ENCODE measurements at regions of chr12 and their contacts with region 1.

Region 1: DNA sequence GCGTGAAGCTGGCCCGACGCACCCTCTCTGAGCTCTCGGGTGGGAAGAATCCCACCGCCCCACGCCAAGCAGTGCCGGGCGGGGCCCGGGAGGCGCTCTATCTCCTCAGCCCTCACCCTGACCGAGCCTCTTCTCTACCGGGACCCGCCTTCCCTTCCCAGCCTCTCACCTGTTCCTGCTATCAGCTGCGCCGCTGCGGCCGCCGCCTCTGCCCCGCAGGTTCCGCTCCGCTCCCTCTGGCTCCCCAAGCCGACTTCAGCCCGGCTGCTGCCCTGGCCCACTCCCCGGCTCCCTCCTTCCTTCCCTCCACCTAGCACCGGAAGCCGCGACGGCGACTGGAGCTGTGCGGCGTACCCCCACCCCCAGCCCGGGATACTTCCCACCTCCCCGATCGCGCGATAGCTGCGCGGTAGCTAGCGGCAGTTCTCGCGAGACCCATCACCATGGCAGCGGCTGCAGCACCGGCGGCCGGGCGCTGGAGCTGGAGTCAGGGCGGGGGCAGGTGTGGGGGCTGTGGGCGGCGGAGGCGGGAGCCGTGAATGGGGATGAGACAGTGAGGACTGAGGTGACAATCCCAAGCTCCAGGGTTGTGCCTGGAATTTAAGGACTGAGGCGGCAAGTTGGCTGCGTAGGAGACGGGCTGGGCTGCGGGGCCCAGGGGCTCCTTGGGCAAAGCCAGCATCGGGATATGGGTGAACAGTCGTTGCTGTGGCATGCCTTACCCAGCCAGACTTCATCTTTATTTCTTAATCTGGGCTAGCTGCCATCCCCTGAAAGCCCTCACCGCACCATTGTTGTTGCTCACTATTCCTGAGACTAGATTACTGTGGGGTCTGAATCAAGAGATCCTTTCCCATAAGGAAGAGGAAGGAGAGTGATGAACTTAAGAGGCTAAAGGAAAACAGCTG is at the start of gene ARF3:
- DNase-seq: peak; percentile 97
- H3K4me3 ChIP-seq: peak within 1 kb of the TSS; percentile 92
- H3K27ac ChIP-seq: peak within 1 kb of the TSS; percentile 86
- H3K4me1 ChIP-seq: peaks cover 16% of the 10 kb centered on the region
- H3K27me3 ChIP-seq: no peaks in the 10 kb centered on the region
- CTCF ChIP-seq: no peak
- total RNA-seq, gene ARF3: 183 and 196 TPM in 2 replicates

Region 2: DNA sequence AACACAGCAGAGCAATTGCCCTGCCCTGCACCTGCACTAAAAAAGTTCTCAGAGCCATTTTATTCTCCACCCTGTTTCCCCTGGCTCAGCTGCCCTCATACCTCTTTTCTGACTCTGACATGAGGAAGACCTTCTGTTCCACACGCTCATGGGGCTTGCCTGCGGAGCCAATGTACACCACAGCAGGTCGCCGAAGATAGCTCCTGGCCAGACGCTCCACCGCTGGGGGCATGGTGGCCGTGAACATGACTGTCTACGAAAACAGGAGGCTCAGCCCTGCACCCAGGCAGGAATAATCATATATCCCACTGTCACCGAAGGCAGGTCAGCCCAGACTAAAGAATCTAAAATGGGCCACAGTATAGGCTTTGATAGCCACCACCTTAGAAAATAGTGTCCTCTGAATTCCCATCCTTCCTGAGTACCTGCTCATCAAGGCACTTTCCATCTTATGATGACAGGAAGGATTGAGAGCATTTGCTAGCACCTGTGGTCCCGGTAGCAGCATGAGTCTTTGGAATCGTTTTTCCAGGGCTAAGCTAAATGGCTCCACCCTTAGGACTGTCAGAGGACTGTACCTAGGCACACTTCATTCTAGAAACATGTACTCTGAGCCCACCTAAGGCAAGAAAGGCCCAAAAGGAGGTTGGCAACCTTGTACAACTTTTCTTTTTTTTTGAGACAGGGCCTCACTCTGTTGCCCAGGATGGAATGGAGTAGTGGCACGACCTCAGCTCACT is 124.9 kb before region 1 on chr12:
- CTCF ChIA-PET with region 1: no interaction called
- POLR2A ChIA-PET with region 1: no interaction called
- intact Hi-C with region 1: no loop called
- DNase-seq: no peak
- H3K4me3 ChIP-seq: no peak overlapping the region
- H3K27ac ChIP-seq: no peak overlapping the region
- H3K4me1 ChIP-seq: no peaks in the 10 kb centered on the region
- H3K27me3 ChIP-seq: no peaks in the 10 kb centered on the region
- CTCF ChIP-seq: no peak

Region 3: DNA sequence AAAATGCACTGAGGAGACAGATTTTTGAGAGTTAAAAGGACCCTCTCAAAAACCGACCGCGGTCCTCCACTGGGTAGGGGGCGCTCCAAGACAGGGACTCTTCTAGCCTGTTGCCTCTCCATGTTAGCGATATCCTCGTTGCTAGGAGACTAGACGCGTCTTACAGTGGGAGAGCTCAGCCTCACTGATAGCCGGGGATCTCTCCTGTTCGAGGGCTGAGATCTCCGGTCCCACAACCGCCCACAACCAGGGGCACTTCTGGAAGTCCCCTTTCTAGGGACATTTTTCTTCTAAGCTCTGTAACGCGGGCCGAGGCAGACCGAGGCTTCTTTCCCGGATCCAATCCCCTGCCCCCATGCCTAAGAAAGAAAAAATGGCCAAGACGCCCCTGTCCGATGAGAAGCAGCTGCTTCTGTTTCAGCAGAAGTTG is 53.4 kb before region 1 on chr12:
- CTCF ChIA-PET with region 1: interaction called, 11 read pairs
- POLR2A ChIA-PET with region 1: no interaction called
- intact Hi-C with region 1: no loop called
- DNase-seq: peak; percentile 96
- H3K4me3 ChIP-seq: peak overlapping the region; percentile 55
- H3K27ac ChIP-seq: no peak overlapping the region
- H3K4me1 ChIP-seq: no peaks in the 10 kb centered on the region
- H3K27me3 ChIP-seq: no peaks in the 10 kb centered on the region
- CTCF ChIP-seq: peak; percentile 73

Region 4: GRCh38 chr12:48925304-48926011 is 31.9 kb before region 1 on chr12 and contains the start of gene FKBP11:
- CTCF ChIA-PET with region 1: no interaction called
- POLR2A ChIA-PET with region 1: interaction called, 15 read pairs
- intact Hi-C with region 1: no loop called
- DNase-seq: peak; percentile 50
- H3K4me3 ChIP-seq: peak within 1 kb of the TSS; percentile 88
- H3K27ac ChIP-seq: peak within 1 kb of the TSS; percentile 70
- H3K4me1 ChIP-seq: peaks cover 11% of the 10 kb centered on the region
- H3K27me3 ChIP-seq: no peaks in the 10 kb centered on the region
- CTCF ChIP-seq: no peak
- total RNA-seq, gene FKBP11: 31.8 and 32.5 TPM in 2 replicates